ENCODE measurements at regions of chr9 and their contacts with region 1.

Region 1: DNA sequence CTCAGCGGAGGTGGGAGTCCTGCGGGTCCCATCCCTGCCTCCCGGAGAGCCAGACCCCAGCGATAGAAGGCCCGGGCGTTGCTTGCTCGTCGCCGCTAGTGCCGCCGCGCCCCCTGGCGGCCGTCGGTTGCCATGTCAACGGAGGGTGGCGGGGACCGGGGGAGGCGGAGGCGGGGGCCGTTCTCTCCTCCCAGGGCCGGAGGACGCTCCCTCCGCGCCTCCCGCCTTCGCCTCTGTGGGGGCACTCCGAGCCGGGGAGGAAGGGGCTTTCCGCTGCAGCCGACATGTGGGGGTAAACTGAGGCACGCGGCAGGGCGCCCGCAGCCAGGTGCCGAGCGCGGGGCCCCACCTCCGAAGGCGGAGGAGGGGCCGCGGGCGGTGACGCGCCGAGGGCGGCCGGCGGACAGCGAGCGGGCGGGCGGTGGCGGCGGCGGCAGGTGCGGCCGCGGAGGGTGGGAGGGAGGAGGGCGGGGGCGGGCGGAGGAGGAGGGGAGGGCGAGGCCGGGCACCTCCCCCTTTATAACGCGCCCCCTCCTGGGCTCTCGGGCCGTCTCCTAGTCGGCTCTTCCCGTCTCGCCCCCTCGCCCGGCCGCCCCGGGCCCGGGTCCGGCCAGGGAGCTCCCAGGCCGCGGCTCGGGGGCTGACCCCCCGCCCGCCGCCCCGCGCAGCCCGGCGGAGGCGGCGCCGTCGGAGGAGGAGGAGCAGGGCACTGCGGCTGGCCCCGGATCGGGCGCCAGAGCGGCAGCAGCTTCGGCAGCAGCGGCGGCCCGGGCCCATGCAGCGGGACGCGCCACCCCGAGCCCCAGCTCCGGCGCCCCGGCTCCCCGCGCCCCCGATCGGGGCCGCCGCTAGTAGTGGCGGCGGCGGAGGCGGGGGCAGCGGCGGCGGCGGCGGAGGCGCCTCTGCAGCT is 556 bp upstream of the CDK9 start:
- DNase-seq: peak; percentile 97
- H3K4me3 Mint-ChIP-seq: peak overlapping the region; percentile 99
- H3K27ac Mint-ChIP-seq: peak overlapping the region; percentile 98
- H3K4me1 Mint-ChIP-seq: peaks cover 57% of the 10 kb centered on the region
- H3K27me3 Mint-ChIP-seq: no peaks in the 10 kb centered on the region

Region 2: DNA sequence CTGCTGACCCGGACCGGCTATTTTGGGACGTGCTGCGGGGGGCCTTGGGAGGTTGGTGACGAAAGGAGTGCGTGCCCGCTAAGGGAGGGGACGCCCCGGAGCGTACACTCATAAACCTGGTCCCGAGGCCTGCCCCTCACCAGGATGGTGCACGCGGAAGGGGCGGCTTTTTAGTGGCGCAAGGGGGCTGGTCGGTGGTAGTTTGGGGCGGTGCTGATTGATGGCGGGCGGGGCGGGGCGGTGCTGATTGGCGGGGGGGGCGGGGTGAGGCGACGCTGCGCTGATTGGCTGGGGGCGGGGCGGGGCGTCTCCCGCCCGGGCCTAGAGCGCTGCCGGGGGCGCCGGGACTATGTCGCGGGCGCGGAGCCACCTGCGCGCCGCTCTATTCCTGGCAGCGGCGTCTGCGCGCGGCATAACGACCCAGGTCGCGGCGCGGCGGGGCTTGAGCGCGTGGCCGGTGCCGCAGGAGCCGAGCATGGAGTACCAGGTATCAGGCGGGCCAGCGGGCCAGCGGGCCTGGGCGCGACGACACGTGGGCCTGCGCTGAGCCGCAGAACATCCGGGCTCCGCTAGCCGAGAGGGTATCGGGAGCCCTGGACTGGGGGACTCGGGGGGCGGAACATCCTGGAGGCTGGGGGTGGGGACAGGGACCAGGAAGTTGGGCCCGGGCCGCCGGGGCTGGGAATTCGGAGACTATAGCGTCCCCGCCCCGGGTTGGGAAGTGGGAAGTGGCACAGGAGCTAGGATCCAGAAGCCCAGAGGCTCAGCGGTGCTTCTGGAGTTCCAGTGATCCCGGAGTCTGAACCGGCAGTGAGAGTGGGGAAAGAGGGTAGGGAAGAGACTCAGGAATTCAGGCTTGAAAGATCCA is 17.5 kb after region 1 on chr9 and contains the start of gene FPGS:
- intact Hi-C with region 1: loop called (anchors 1 kb)
- DNase-seq: peak; percentile 94
- H3K4me3 Mint-ChIP-seq: peak within 1 kb of the TSS; percentile 99
- H3K27ac Mint-ChIP-seq: peak within 1 kb of the TSS; percentile 97
- H3K4me1 Mint-ChIP-seq: peaks cover 25% of the 10 kb centered on the region
- H3K27me3 Mint-ChIP-seq: no peaks in the 10 kb centered on the region
- total RNA-seq, gene FPGS: 126 and 128 TPM in 2 replicates

Region 3: DNA sequence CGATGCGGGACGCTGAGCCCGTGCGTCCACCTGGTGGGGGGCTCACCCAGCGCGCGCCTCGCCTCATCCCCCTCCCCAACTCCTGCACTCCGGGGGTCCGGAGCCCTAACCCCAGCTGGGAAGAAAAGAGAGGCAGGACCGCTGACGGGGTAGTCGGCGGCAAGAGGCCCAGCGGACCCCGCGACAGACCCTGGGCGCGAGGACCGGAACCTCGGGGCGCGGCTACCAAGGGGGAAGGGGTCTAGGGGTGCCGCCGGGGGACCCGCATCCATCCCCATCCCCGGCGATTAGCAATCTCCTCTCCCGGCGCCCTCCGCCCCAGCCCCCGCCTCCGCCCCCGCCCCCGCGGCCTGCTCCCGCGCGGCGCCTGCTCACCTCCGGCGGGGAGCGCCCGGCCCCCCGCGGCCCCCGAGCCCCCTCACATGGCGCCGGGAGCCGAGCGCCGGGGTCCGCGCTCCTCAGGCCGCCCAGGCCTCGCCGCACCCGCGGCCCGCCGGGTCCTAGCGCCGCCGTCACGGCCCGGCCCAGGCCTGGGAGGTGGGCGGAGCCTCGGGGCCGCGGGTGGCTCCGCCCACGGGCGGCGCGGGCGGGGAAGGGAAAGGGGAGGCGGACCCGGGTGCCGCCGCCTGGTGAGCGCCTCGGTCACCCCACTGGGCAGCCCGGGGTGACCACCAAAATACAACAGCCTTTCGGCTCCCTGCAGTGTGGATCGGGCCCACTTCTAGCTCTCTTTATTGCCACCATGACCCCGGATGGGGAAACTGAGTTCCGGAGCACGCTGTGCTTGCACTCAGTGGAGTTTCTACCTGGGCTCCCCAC is 114.1 kb after region 1 on chr9 and contains the start of gene ST6GALNAC6:
- intact Hi-C with region 1: loop called (anchors 2 kb)
- DNase-seq: peak; percentile 94
- H3K4me3 Mint-ChIP-seq: peak within 1 kb of the TSS; percentile 87
- H3K27ac Mint-ChIP-seq: peak within 1 kb of the TSS; percentile 87
- H3K4me1 Mint-ChIP-seq: peaks cover 31% of the 10 kb centered on the region
- H3K27me3 Mint-ChIP-seq: no peaks in the 10 kb centered on the region
- total RNA-seq, gene ST6GALNAC6: 53.3 and 61.2 TPM in 2 replicates

Region 4: DNA sequence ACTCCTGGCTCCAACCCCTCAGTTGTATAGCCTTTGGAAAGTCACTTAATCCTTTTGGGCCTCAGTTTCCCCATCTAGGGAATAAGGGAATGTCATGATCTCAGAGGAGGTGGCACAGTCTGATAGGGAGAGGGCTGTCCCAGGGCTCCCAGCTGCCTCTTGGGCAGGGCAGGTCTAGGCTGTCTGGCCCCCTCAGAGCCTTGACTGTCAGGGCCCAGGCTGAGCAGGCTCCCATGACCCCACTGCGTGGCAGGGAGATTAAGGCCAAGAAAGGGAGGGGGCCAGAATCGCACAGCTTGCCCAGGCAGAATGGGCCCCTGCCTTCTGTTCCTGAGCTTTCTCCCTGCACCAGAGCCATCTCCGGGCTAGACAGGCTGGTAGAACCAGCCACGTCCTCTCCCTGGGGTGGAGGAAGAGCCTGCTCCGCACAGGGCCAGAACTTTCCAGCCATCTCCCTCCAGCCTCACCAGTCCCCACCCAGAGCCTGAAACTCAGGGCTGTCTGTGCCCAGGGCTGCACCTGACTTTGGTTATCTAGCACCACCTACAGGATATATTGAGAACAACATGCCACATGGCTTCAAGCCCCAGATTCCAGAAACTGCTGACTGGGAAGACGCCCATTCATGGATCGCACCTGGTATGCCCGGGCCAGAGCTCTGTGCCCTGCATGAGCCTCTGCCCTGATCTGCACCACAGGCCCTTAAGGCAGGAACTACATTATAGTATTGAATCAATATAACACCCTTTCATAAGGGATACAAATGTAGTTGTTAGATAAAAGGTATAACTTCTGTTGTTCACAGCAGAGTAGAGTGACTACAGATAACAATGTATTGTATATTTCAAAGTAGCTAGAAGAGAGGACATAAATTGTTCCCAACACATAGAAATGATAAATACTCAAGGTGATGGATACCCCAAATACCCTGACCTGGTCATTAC is 249.8 kb after region 1 on chr9:
- intact Hi-C with region 1: loop called (anchors 10 kb)
- DNase-seq: peak; percentile 92
- H3K4me3 Mint-ChIP-seq: no peak overlapping the region
- H3K27ac Mint-ChIP-seq: peak overlapping the region; percentile 9
- H3K4me1 Mint-ChIP-seq: peaks cover 30% of the 10 kb centered on the region
- H3K27me3 Mint-ChIP-seq: no peaks in the 10 kb centered on the region